Ascending aorta (tissue), 2 donors: ENCODE measurements at regions of chr1 and their contacts with region 1.

Region 1: GRCh38 chr1:235160957-235161684 is at the start of gene RBM34:
- DNase-seq: peak; percentile 64 to 95
- H3K4me3 ChIP-seq: peak within 1 kb of the TSS; percentile 67 to 86
- H3K27ac ChIP-seq: peak within 1 kb of the TSS; percentile 85
- H3K4me1 ChIP-seq: peaks cover 6 to 9% of the 10 kb centered on the region in 2 donors
- H3K27me3 ChIP-seq: no peaks in the 10 kb centered on the region
- CTCF ChIP-seq: peak in 2 of 3 experiments; percentile 15 to 35
- total RNA-seq, gene RBM34: 53.6 TPM

Region 2: DNA sequence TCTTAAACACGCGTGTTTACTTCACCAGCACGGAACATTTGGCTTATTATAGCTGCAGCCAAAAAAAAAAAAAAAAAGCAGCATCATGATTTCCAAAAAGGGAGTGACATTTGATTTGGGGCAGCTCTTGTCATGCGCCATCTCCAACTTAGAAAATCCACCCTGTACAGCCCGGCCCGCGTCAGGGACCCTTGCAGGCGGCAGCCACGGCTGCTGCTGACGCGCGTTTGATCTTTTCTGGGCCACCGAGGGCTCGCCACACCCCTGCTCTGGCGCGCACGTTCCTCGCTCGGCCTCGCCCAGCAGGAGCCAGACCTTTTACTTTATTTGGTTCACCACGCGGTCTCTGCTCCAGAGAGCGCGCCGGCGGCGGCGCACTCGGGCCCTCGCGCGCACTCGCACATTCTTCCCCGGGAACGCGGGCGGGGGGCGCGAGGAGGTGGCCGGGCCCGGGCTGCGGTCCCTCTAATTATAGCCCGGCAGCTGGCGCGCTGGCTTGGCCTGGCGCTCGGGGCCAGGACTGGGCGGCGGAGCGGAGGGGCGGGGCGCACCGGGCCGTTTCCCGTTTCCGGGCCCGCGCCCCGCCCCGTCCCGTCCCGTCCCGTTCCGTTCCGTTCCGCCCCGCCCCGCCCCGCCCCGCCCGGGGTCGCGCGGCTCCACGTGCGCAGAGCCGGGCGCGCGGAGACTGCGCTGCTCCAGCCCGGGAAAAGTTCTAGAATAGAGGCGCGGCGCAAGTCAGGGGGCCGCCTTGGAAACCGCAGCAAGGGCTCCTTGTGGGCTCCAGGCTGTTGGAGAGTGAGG is 561.3 kb before region 1 on chr1:
- intact Hi-C with region 1: no loop called
- DNase-seq: peak; percentile 76 to 96
- H3K4me3 ChIP-seq: peak overlapping the region; percentile 49 to 57
- H3K27ac ChIP-seq: peak overlapping the region; percentile 96 to 99
- H3K4me1 ChIP-seq: peaks cover 11 to 40% of the 10 kb centered on the region in 2 donors
- H3K27me3 ChIP-seq: no peaks in the 10 kb centered on the region
- CTCF ChIP-seq: peak in 1 of 3 experiments; percentile 9

Region 3: GRCh38 chr1:235367000-235367908 is 206.1 kb after region 1 on chr1 and contains the start of gene TBCE:
- intact Hi-C with region 1: loop called (anchors 2 kb)
- DNase-seq: peak; percentile 86 to 99
- H3K4me3 ChIP-seq: peak within 1 kb of the TSS; percentile 68 to 77
- H3K27ac ChIP-seq: peak within 1 kb of the TSS; percentile 68 to 70
- H3K4me1 ChIP-seq: peaks cover 0 to 5% of the 10 kb centered on the region in 2 donors
- H3K27me3 ChIP-seq: no peaks in the 10 kb centered on the region
- CTCF ChIP-seq: peak in 1 of 3 experiments; percentile 16
- total RNA-seq, gene TBCE: 67.8 TPM

Region 4: DNA sequence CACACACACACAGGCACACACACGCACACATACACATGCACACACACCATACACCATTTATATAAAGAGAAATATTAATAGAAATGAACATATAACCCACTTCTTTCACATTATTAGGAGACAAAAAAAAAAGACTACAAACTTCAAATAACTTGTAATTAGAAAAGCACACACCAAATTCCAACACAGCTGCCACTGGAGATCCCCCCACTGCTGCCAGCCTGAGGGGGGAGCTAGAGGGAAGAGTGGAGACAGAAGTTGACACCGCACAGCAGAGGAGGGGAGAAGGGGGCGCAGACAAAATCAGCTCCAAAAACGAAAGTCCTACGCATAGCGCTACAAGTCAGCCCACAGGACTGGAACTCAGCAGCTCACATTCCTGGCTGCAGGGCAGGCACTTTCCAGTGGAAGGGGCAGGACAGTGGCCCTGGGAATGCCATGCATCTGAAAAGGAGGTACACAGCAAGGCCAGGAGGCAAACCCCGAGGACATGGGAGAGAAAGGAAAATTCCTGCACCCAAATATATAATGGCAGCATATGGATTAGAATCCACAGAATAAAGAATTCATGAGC is 1399.2 kb after region 1 on chr1:
- intact Hi-C with region 1: no loop called
- DNase-seq: no peak
- H3K4me3 ChIP-seq: no peak overlapping the region
- H3K27ac ChIP-seq: no peak overlapping the region
- H3K4me1 ChIP-seq: no peaks in the 10 kb centered on the region
- H3K27me3 ChIP-seq: no peaks in the 10 kb centered on the region
- CTCF ChIP-seq: no peak